Psoas muscle (tissue), 8 donors: ENCODE measurements at regions of chr2 and their contacts with region 1.

Region 1: GRCh38 chr2:236576087-236576486 is 6.5 kb downstream of the ACKR3 start:
- DNase-seq: no peak
- ATAC-seq: peak in 2 of 4 donors; percentile 16 to 21
- H3K4me3 ChIP-seq: peak overlapping the region; percentile 17
- H3K27ac ChIP-seq: peak overlapping the region; percentile 60
- H3K4me1 ChIP-seq: peaks cover 37% of the 10 kb centered on the region
- H3K27me3 ChIP-seq: no peaks in the 10 kb centered on the region
- CTCF ChIP-seq: no peak

Region 2: DNA sequence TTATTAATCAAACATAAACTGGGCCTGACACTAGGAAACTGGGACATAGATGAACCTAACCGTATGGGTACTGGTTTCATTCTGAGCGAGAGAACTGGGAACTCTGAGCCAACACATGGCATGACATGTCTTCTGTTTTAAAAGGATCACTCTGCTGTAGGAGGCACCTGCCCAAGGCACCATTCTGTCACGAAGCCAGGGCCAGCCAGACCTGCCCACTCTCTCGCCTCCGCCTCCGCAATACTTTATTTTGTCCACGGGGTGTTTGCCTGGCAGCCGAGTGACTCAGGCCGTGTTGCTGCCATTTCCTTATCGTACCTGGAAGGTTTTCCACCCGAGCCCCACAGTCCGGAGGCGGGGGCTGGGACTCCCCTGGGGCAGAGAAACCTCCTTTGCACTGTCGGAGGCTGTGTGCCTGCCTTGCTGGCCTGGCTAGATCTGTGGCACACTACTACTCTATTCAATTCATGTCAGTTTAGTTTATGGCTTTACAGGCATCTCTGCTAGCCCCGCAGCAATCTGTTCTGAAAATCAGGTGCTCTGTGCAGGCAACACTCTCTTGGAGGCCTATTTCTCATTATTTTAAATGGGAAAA is 126.8 kb before region 1 on chr2:
- intact Hi-C with region 1: no loop called
- DNase-seq: no peak
- ATAC-seq: no peak
- H3K4me3 ChIP-seq: no peak overlapping the region
- H3K27ac ChIP-seq: no peak overlapping the region
- H3K4me1 ChIP-seq: no peaks in the 10 kb centered on the region
- H3K27me3 ChIP-seq: peaks cover 0 to 17% (median 0%) of the 10 kb centered on the region in 3 donors
- CTCF ChIP-seq: no peak

Region 3: GRCh38 chr2:236657801-236658200 is 81.7 kb after region 1 on chr2:
- intact Hi-C with region 1: no loop called
- DNase-seq: no peak
- ATAC-seq: no peak
- H3K4me3 ChIP-seq: no peak overlapping the region
- H3K27ac ChIP-seq: no peak overlapping the region
- H3K4me1 ChIP-seq: peaks cover under 1% of the 10 kb centered on the region
- H3K27me3 ChIP-seq: no peaks in the 10 kb centered on the region
- CTCF ChIP-seq: no peak

Region 4: DNA sequence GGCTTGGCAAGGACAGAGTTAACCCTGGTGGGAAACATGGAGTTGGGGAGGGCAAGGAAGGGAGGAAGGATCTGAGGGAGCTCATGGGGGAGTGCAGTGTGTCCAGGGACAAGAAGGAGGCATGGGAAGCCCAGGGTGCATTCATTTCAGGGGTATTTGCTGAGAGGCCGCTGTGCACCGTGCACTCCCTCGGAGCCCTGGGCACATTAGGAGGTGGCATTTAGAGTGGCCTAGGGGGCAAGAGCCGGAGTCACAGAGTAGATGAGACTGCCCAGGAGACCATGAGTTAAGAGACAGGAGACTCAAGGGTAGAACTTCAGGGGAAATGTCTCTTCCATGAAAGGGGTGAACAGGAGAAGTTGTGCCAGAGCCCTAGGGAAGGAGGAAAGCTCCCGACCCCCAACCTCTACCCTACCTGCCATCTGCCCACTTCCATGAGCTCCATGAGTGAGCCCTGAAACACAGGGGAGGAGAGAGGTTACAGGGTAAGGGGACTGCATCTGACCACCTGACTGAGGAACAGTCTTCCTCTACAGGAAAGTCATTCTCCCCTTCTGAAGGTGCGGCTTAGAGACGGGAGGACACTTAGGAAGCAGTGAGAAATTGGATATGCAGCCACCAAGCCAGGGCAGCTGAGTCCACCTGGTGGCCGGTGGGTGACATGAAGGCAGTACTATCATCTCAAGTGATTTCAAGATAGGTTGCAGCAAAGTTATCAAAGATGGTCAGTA is 451.1 kb after region 1 on chr2:
- intact Hi-C with region 1: loop called (anchors 5 kb)
- DNase-seq: peak; percentile 77 to 83
- ATAC-seq: peak; percentile 93 to 98 (median 94)
- H3K4me3 ChIP-seq: no peak overlapping the region
- H3K27ac ChIP-seq: no peak overlapping the region
- H3K4me1 ChIP-seq: no peaks in the 10 kb centered on the region
- H3K27me3 ChIP-seq: peaks cover 0 to 2% (median 0%) of the 10 kb centered on the region in 3 donors
- CTCF ChIP-seq: peak; percentile 93